ENCODE measurements at regions of chr19 and their contacts with region 1.

Region 1: DNA sequence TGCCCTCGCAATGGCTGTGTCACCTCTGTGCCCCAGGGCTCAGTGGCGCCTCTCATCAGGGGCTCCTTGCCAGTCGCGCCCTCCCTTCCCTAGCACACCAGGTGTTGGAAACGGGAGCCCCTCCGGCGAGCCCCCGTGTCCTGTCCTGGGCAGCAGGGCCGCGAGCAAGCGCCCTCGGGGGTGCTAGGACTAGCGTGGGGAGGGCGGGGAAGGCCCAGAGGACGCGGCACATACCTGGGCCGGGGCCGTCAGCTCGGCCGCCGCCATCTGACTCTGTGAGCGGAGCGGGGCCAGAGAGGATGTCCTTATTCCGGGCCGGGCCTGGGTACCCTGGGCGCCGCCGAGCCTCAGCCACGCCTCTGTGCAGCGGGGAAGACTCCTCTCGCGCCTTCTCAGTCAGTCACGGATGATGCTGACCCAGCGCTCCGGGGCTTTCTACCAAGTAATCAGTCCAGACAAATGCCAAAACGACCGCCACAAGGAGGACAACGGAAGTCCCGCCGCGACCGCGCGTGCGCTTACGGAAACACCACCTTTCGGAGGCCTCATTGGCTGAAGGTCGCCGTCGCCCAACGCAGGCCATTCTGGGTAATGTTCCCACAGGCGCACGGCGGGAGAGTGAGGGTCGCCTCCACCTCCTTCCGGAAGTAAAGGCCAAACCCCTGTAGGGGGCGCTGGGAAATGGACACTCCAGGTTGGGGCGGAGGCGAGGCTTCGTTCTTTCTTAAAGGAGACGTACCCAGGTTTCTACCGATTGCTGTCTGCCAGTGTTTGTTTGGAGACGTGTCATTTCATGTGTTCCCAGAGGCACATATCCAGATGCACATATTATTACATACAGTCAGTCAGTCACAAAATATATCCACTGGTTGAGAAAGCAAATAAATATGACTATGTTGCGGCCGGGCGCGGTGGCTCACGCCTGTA is at the start of gene ZNF256:
- DNase-seq: peak; percentile 95
- ATAC-seq: peak; percentile 99
- H3K4me3 ChIP-seq: peak within 1 kb of the TSS; percentile 71 to 90 (median 87)
- H3K4me3 Mint-ChIP-seq: peak within 1 kb of the TSS; percentile 96
- H3K27ac ChIP-seq: peak within 1 kb of the TSS; percentile 77 to 89
- H3K27ac Mint-ChIP-seq: peak within 1 kb of the TSS; percentile 89
- H3K4me1 ChIP-seq: peaks cover 16 to 27% of the 10 kb centered on the region in 2 donors
- H3K4me1 Mint-ChIP-seq: peaks cover 36% of the 10 kb centered on the region
- H3K27me3 ChIP-seq: peaks cover 0 to 6% (median 0%) of the 10 kb centered on the region in 4 experiments
- H3K27me3 Mint-ChIP-seq: peaks cover 6% of the 10 kb centered on the region
- CTCF ChIP-seq: peak; percentile 61
- total RNA-seq, gene ZNF256: 18.3 and 19.0 TPM in 2 replicates

Region 2: DNA sequence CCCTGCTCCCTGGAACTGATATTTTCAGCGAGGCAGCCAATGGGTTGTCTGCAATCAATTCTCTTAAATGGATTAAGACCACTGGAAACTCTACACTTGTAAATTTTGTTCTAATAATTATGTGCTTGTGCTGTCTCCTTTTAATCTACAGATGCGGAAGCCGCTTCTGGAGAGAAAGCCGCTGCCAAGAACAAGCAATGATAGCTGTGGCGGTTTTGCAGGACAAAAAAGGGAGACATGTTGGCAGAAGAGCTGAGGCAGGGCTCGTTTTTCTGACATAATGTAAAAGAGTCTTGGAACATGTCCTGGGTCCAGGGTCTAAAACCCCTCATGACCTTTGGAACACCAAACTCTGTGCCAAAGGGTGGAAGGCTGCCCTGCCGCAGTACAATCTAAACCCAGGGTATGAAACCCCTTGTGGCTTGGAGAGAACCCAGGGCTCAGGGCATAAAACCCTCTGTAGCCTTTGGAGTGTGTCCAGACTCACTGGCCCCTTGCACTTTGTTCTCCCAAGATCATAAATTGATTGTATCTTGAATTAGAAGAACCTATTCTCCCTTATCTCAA is 43.8 kb before region 1 on chr19:
- CTCF ChIA-PET with region 1: no interaction called
- POLR2A ChIA-PET with region 1: no interaction called
- intact Hi-C with region 1: loop called (anchors 5 kb)
- DNase-seq: no peak
- ATAC-seq: no peak
- H3K4me3 ChIP-seq: no peak overlapping the region
- H3K4me3 Mint-ChIP-seq: no peak overlapping the region
- H3K27ac ChIP-seq: no peak overlapping the region
- H3K27ac Mint-ChIP-seq: no peak overlapping the region
- H3K4me1 ChIP-seq: peaks cover 0 to 8% of the 10 kb centered on the region in 2 donors
- H3K4me1 Mint-ChIP-seq: peaks cover 15% of the 10 kb centered on the region
- H3K27me3 ChIP-seq: no peaks in the 10 kb centered on the region
- H3K27me3 Mint-ChIP-seq: no peaks in the 10 kb centered on the region
- CTCF ChIP-seq: peak; percentile 5

Region 3: GRCh38 chr19:57914531-57914930 is 32.9 kb before region 1 on chr19:
- CTCF ChIA-PET with region 1: no interaction called
- POLR2A ChIA-PET with region 1: no interaction called
- intact Hi-C with region 1: loop called (anchors 1 kb)
- DNase-seq: no peak
- ATAC-seq: no peak
- H3K4me3 ChIP-seq: no peak overlapping the region
- H3K4me3 Mint-ChIP-seq: peak overlapping the region; percentile 96
- H3K27ac ChIP-seq: no peak overlapping the region
- H3K27ac Mint-ChIP-seq: peak overlapping the region; percentile 26
- H3K4me1 ChIP-seq: peaks cover 9 to 13% of the 10 kb centered on the region in 2 donors
- H3K4me1 Mint-ChIP-seq: peaks cover 40% of the 10 kb centered on the region
- H3K27me3 ChIP-seq: no peaks in the 10 kb centered on the region
- H3K27me3 Mint-ChIP-seq: no peaks in the 10 kb centered on the region
- CTCF ChIP-seq: no peak

Region 4: GRCh38 chr19:57934820-57935665 is 12.4 kb before region 1 on chr19 and contains the start of gene ZNF418:
- CTCF ChIA-PET with region 1: no interaction called
- POLR2A ChIA-PET with region 1: interaction called, 4 read pairs
- intact Hi-C with region 1: loop called (anchors 1 kb)
- DNase-seq: peak; percentile 81
- ATAC-seq: peak; percentile 99
- H3K4me3 ChIP-seq: peak within 1 kb of the TSS; percentile 27 to 83 (median 77)
- H3K4me3 Mint-ChIP-seq: peak within 1 kb of the TSS; percentile 94
- H3K27ac ChIP-seq: peak within 1 kb of the TSS; percentile 74 to 87
- H3K27ac Mint-ChIP-seq: peak within 1 kb of the TSS; percentile 92
- H3K4me1 ChIP-seq: peaks cover 8 to 14% of the 10 kb centered on the region in 2 donors
- H3K4me1 Mint-ChIP-seq: peaks cover 17% of the 10 kb centered on the region
- H3K27me3 ChIP-seq: no peaks in the 10 kb centered on the region
- H3K27me3 Mint-ChIP-seq: no peaks in the 10 kb centered on the region
- CTCF ChIP-seq: no peak
- total RNA-seq, gene ZNF418: 35.8 and 38.9 TPM in 2 replicates

Region 5: GRCh38 chr19:58097781-58098681 is 150.6 kb after region 1 on chr19 and contains the start of gene ZSCAN18:
- CTCF ChIA-PET with region 1: no interaction called
- POLR2A ChIA-PET with region 1: no interaction called
- intact Hi-C with region 1: loop called (anchors 1 kb)
- DNase-seq: peak; percentile 100
- ATAC-seq: peak; percentile 93
- H3K4me3 ChIP-seq: peak within 1 kb of the TSS; percentile 73 to 96 (median 92)
- H3K4me3 Mint-ChIP-seq: peak within 1 kb of the TSS; percentile 81
- H3K27ac ChIP-seq: peak within 1 kb of the TSS; percentile 98 to 100
- H3K27ac Mint-ChIP-seq: peak within 1 kb of the TSS; percentile 97
- H3K4me1 ChIP-seq: peaks cover 13 to 16% of the 10 kb centered on the region in 2 donors
- H3K4me1 Mint-ChIP-seq: peaks cover 18% of the 10 kb centered on the region
- H3K27me3 ChIP-seq: no peaks in the 10 kb centered on the region
- H3K27me3 Mint-ChIP-seq: peaks cover 3% of the 10 kb centered on the region
- CTCF ChIP-seq: no peak
- total RNA-seq, gene ZSCAN18: 84.9 and 90.5 TPM in 2 replicates

Region 6: DNA sequence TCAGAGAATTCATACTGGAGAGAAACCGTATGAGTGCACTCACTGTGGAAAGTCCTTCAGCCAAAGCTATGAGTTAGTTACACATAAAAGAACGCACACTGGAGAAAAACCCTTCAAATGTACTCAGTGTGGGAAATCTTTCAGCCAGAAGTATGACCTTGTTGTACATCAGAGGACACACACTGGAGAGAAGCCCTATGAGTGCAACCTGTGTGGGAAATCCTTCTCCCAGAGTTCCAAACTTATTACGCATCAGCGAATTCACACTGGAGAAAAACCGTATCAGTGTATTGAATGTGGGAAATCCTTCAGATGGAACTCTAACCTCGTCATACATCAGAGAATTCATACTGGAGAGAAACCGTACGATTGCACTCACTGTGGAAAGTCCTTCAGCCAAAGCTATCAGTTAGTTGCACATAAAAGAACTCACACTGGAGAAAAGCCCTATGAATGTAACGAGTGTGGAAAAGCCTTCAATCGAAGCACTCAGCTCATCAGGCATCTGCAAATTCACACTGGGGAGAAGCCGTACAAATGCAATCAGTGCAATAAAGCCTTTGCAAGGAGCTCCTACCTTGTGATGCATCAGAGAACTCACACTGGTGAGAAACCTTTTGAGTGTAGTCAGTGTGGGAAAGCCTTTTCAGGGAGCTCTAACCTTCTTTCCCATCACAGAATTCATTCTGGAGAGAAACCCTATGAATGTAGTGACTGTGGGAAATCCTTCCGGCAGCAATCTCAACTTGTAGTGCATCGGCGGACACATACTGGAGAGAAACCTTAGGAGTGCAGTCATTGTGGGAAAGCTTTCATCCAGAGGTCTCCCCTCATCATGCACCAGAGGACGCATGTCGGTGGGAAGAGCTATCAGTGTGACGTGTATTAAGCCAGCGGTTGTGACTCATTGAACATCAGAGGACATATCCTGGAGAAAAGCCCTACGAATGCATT is 314.8 kb after region 1 on chr19:
- CTCF ChIA-PET with region 1: no interaction called
- POLR2A ChIA-PET with region 1: no interaction called
- intact Hi-C with region 1: no loop called
- DNase-seq: no peak
- ATAC-seq: no peak
- H3K4me3 ChIP-seq: peak overlapping the region in 1 of 5 experiments; percentile 7
- H3K4me3 Mint-ChIP-seq: no peak overlapping the region
- H3K27ac ChIP-seq: no peak overlapping the region
- H3K27ac Mint-ChIP-seq: no peak overlapping the region
- H3K4me1 ChIP-seq: no peaks in the 10 kb centered on the region
- H3K4me1 Mint-ChIP-seq: no peaks in the 10 kb centered on the region
- H3K27me3 ChIP-seq: no peaks in the 10 kb centered on the region
- H3K27me3 Mint-ChIP-seq: no peaks in the 10 kb centered on the region
- CTCF ChIP-seq: no peak